CD8-positive, alpha-beta T cell (primary cell): ENCODE measurements at regions of chr14 and their contacts with region 1.

Region 1: GRCh38 chr14:68788996-68789820 is 3.7 kb downstream of the ZFP36L1 start:
- DNase-seq: peak; percentile 75 to 94 (median 90)
- ATAC-seq: peak; percentile 36
- H3K4me3 ChIP-seq: peak overlapping the region; percentile 94 to 97
- H3K4me3 Mint-ChIP-seq: peak overlapping the region; percentile 92
- H3K27ac ChIP-seq: peak overlapping the region; percentile 99 to 100
- H3K27ac Mint-ChIP-seq: peak overlapping the region; percentile 100
- H3K4me1 ChIP-seq: peaks cover 53% of the 10 kb centered on the region
- H3K4me1 Mint-ChIP-seq: peaks cover 58% of the 10 kb centered on the region
- H3K27me3 ChIP-seq: no peaks in the 10 kb centered on the region
- H3K27me3 Mint-ChIP-seq: no peaks in the 10 kb centered on the region
- CTCF ChIP-seq: peak; percentile 84

Region 2: GRCh38 chr14:68084256-68084655 is 705.0 kb before region 1 on chr14:
- CTCF ChIA-PET with region 1: no interaction called
- POLR2A ChIA-PET with region 1: no interaction called
- intact Hi-C with region 1: no loop called
- DNase-seq: no peak
- ATAC-seq: no peak
- H3K4me3 ChIP-seq: no peak overlapping the region
- H3K4me3 Mint-ChIP-seq: no peak overlapping the region
- H3K27ac ChIP-seq: no peak overlapping the region
- H3K27ac Mint-ChIP-seq: no peak overlapping the region
- H3K4me1 ChIP-seq: no peaks in the 10 kb centered on the region
- H3K4me1 Mint-ChIP-seq: peaks cover 15% of the 10 kb centered on the region
- H3K27me3 ChIP-seq: no peaks in the 10 kb centered on the region
- H3K27me3 Mint-ChIP-seq: no peaks in the 10 kb centered on the region
- CTCF ChIP-seq: no peak

Region 3: GRCh38 chr14:68283378-68284123 is 505.7 kb before region 1 on chr14:
- CTCF ChIA-PET with region 1: interaction called, 40 read pairs
- POLR2A ChIA-PET with region 1: interaction called, 77 read pairs
- intact Hi-C with region 1: loop called (anchors 10 kb)
- DNase-seq: peak; percentile 32 to 87 (median 72)
- ATAC-seq: peak; percentile 69
- H3K4me3 ChIP-seq: peak overlapping the region in 1 of 2 experiments; percentile 6
- H3K4me3 Mint-ChIP-seq: peak overlapping the region; percentile 62
- H3K27ac ChIP-seq: peak overlapping the region; percentile 57 to 89
- H3K27ac Mint-ChIP-seq: peak overlapping the region; percentile 98
- H3K4me1 ChIP-seq: peaks cover 71% of the 10 kb centered on the region
- H3K4me1 Mint-ChIP-seq: peaks cover 85% of the 10 kb centered on the region
- H3K27me3 ChIP-seq: no peaks in the 10 kb centered on the region
- H3K27me3 Mint-ChIP-seq: no peaks in the 10 kb centered on the region
- CTCF ChIP-seq: no peak

Region 4: DNA sequence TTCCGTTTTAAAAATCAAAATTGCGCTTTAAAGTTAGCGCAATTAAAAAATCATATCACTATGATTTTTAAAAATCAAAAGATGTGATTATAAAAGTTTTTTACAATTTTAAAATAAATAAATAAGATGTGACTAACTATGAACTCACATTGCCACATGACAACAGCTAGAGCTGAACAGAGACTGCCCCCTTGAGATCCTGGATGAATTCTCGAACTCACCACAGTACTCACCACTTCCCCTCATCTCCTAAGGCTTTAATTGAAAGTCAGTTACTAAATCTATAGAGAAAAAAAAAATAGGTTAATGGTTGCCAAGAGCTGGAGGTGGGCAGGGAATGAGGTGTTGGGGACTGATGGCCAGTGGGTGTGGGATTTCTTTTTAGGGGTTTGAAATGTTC is 380.5 kb before region 1 on chr14:
- CTCF ChIA-PET with region 1: interaction called, 17 read pairs
- POLR2A ChIA-PET with region 1: interaction called, 4 read pairs
- intact Hi-C with region 1: loop called in 1 of 2 experiments (anchors 10 kb)
- DNase-seq: peak in 2 of 9 experiments; percentile 41 to 64
- ATAC-seq: peak; percentile 49
- H3K4me3 ChIP-seq: no peak overlapping the region
- H3K4me3 Mint-ChIP-seq: no peak overlapping the region
- H3K27ac ChIP-seq: no peak overlapping the region
- H3K27ac Mint-ChIP-seq: peak overlapping the region; percentile 4
- H3K4me1 ChIP-seq: peaks cover 25% of the 10 kb centered on the region
- H3K4me1 Mint-ChIP-seq: peaks cover 38% of the 10 kb centered on the region
- H3K27me3 ChIP-seq: no peaks in the 10 kb centered on the region
- H3K27me3 Mint-ChIP-seq: no peaks in the 10 kb centered on the region
- CTCF ChIP-seq: no peak

Region 5: DNA sequence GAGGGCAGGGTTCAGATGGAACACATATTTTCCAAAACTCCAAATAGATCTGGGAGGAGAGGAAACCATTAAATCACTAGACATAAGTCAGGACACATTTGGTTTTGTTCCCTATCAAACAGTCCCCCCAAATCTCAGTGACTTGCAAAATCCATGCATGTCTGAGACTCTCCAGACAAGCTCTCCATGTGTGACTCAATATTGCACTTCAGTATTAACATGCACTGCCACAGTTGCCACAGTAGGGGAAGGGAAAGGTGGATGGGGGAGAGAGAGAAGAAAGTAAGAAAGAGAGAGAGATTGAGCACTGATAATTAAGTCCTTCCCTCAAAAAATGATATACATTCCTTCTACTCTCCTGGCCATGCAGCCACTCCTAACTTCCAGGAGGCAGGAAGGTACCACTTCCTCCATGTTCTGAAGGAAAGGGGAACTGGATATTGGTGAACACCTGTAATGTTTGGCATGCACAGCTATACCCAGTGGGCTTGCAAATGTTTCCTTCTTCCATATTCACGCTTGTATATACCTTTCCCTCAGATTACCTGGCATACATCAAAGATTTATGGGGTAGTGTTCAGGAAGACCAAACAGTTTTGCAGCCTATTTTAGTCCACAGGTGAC is 306.3 kb before region 1 on chr14:
- CTCF ChIA-PET with region 1: interaction called, 3 read pairs
- POLR2A ChIA-PET with region 1: interaction called, 6 read pairs
- intact Hi-C with region 1: loop called in 1 of 2 experiments (anchors 5 kb)
- DNase-seq: no peak
- ATAC-seq: no peak
- H3K4me3 ChIP-seq: no peak overlapping the region
- H3K4me3 Mint-ChIP-seq: no peak overlapping the region
- H3K27ac ChIP-seq: no peak overlapping the region
- H3K27ac Mint-ChIP-seq: peak overlapping the region; percentile 94
- H3K4me1 ChIP-seq: peaks cover 43% of the 10 kb centered on the region
- H3K4me1 Mint-ChIP-seq: peaks cover 76% of the 10 kb centered on the region
- H3K27me3 ChIP-seq: no peaks in the 10 kb centered on the region
- H3K27me3 Mint-ChIP-seq: no peaks in the 10 kb centered on the region
- CTCF ChIP-seq: no peak

Region 6: GRCh38 chr14:68627880-68628607 is 161.2 kb before region 1 on chr14:
- CTCF ChIA-PET with region 1: interaction called, 11 read pairs
- POLR2A ChIA-PET with region 1: interaction called, 4 read pairs
- intact Hi-C with region 1: loop called (anchors 5 kb)
- DNase-seq: peak; percentile 12 to 80 (median 61)
- ATAC-seq: peak; percentile 65
- H3K4me3 ChIP-seq: peak overlapping the region; percentile 42 to 46
- H3K4me3 Mint-ChIP-seq: peak overlapping the region; percentile 81
- H3K27ac ChIP-seq: peak overlapping the region in 1 of 2 experiments; percentile 30
- H3K27ac Mint-ChIP-seq: peak overlapping the region; percentile 84
- H3K4me1 ChIP-seq: peaks cover 16% of the 10 kb centered on the region
- H3K4me1 Mint-ChIP-seq: peaks cover 23% of the 10 kb centered on the region
- H3K27me3 ChIP-seq: no peaks in the 10 kb centered on the region
- H3K27me3 Mint-ChIP-seq: no peaks in the 10 kb centered on the region
- CTCF ChIP-seq: no peak

Region 7: DNA sequence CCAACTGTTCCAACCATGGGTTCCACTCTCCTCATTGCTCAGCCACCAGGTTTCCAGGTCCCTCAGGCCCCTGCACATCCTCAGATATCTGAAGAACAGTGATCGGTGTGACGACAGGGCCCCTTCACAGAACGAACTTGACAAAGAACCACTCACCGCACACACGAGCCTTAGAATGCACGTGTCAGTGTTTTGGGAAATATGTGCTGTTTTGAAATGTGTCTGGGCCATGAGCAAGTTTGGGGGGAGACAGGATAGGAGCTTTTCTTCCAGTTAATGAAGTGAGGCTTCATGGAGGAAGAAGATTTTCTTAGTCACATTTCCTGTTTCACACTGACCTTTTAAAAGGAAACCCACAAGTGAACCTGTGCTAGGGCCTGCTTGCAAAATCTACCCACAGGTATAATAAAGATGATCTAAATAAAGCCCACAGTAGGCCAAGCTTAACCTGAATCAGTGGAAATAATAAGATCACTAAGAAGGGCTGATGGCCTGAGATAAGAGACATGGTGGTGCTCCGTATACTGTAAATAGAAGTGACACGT is 54.9 kb before region 1 on chr14:
- CTCF ChIA-PET with region 1: interaction called, 3 read pairs
- POLR2A ChIA-PET with region 1: interaction called, 10 read pairs
- intact Hi-C with region 1: loop called (anchors 5 kb)
- DNase-seq: peak in 8 of 9 experiments; percentile 11 to 69 (median 51)
- ATAC-seq: peak; percentile 81
- H3K4me3 ChIP-seq: no peak overlapping the region
- H3K4me3 Mint-ChIP-seq: peak overlapping the region; percentile 19
- H3K27ac ChIP-seq: peak overlapping the region in 1 of 2 experiments; percentile 76
- H3K27ac Mint-ChIP-seq: peak overlapping the region; percentile 87
- H3K4me1 ChIP-seq: peaks cover 21% of the 10 kb centered on the region
- H3K4me1 Mint-ChIP-seq: peaks cover 34% of the 10 kb centered on the region
- H3K27me3 ChIP-seq: no peaks in the 10 kb centered on the region
- H3K27me3 Mint-ChIP-seq: no peaks in the 10 kb centered on the region
- CTCF ChIP-seq: no peak

Region 8: DNA sequence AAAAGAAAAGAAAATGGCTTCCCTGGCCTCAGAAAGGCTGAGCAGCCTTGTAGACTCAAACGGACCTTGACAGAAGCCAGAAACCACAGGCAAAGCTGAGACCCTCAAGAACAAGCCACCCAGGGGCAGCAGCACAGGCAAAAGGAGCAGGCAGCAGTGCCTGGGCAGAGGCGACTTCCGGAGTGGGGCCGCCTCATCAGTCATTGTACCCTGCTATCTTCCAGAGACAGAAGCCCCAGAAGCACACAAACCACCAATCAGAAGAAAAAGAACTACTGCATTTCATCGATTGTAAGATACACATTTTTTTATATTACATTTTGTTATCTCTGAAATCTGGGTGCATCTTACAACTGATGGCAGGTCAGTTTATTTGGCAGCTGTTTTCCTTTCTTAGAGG is 61.9 kb after region 1 on chr14:
- CTCF ChIA-PET with region 1: no interaction called
- POLR2A ChIA-PET with region 1: no interaction called
- intact Hi-C with region 1: no loop called
- DNase-seq: no peak
- ATAC-seq: no peak
- H3K4me3 ChIP-seq: no peak overlapping the region
- H3K4me3 Mint-ChIP-seq: no peak overlapping the region
- H3K27ac ChIP-seq: no peak overlapping the region
- H3K27ac Mint-ChIP-seq: no peak overlapping the region
- H3K4me1 ChIP-seq: no peaks in the 10 kb centered on the region
- H3K4me1 Mint-ChIP-seq: peaks cover 3% of the 10 kb centered on the region
- H3K27me3 ChIP-seq: no peaks in the 10 kb centered on the region
- H3K27me3 Mint-ChIP-seq: no peaks in the 10 kb centered on the region
- CTCF ChIP-seq: no peak

Region 9: GRCh38 chr14:68874746-68875155 is 85.5 kb after region 1 on chr14:
- CTCF ChIA-PET with region 1: no interaction called
- POLR2A ChIA-PET with region 1: no interaction called
- intact Hi-C with region 1: no loop called
- DNase-seq: no peak
- ATAC-seq: no peak
- H3K4me3 ChIP-seq: no peak overlapping the region
- H3K4me3 Mint-ChIP-seq: no peak overlapping the region
- H3K27ac ChIP-seq: no peak overlapping the region
- H3K27ac Mint-ChIP-seq: no peak overlapping the region
- H3K4me1 ChIP-seq: no peaks in the 10 kb centered on the region
- H3K4me1 Mint-ChIP-seq: no peaks in the 10 kb centered on the region
- H3K27me3 ChIP-seq: no peaks in the 10 kb centered on the region
- H3K27me3 Mint-ChIP-seq: no peaks in the 10 kb centered on the region
- CTCF ChIP-seq: no peak

Region 10: DNA sequence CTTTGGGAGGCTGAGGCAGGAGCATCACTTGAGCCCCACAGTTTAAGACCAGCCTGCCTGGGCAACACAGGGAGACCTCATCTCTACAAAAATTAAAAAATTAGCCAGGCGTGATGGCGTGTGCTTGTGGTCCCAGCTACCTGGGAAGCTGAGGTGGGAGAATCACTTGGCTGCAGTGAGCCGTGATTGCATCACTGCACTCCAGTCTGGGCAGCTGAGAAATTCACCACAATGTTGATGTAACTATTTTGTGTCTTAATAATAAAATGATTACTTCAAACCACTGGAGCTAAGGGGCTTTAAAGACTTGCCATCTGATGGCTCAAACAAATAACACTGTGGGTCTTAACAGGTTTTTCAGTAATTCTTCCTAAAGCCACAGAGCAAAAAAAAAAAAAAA is 598.1 kb after region 1 on chr14:
- CTCF ChIA-PET with region 1: no interaction called
- POLR2A ChIA-PET with region 1: no interaction called
- intact Hi-C with region 1: no loop called
- DNase-seq: no peak
- ATAC-seq: no peak
- H3K4me3 ChIP-seq: no peak overlapping the region
- H3K4me3 Mint-ChIP-seq: no peak overlapping the region
- H3K27ac ChIP-seq: no peak overlapping the region
- H3K27ac Mint-ChIP-seq: no peak overlapping the region
- H3K4me1 ChIP-seq: peaks cover 6% of the 10 kb centered on the region
- H3K4me1 Mint-ChIP-seq: peaks cover 52% of the 10 kb centered on the region
- H3K27me3 ChIP-seq: no peaks in the 10 kb centered on the region
- H3K27me3 Mint-ChIP-seq: no peaks in the 10 kb centered on the region
- CTCF ChIP-seq: no peak